Dorsolateral prefrontal cortex (tissue), 120 donors: ENCODE measurements at regions of chr9 and their contacts with region 1.

Region 1: GRCh38 chr9:97501177-97501971 is at the start of gene TMOD1:
- DNase-seq: peak in 9 of 10 donors; percentile 29 to 81 (median 63)
- H3K4me3 ChIP-seq: peak within 1 kb of the TSS; percentile 64 to 97 (median 85)
- H3K27ac ChIP-seq: peak within 1 kb of the TSS in 57 of 59 donors; percentile 48 to 95 (median 82)
- H3K27me3 ChIP-seq: no peaks in the 10 kb centered on the region
- CTCF ChIP-seq: peak in 21 of 56 donors; percentile 8 to 45 (median 23)
- total RNA-seq, gene TMOD1: 17.3 to 70.1 (median 37.3) TPM

Region 2: GRCh38 chr9:97062417-97062985 is 438.9 kb before region 1 on chr9:
- intact Hi-C with region 1: no loop called
- DNase-seq: no peak
- H3K4me3 ChIP-seq: no peak overlapping the region
- H3K27ac ChIP-seq: no peak overlapping the region
- H3K27me3 ChIP-seq: no peaks in the 10 kb centered on the region
- CTCF ChIP-seq: no peak

Region 3: GRCh38 chr9:97468658-97469448 is 32.5 kb before region 1 on chr9:
- intact Hi-C with region 1: loop called in 1 of 2 experiments (anchors 5 kb)
- DNase-seq: peak; percentile 60 to 91 (median 80)
- H3K4me3 ChIP-seq: peak overlapping the region in 1 of 59 donors; percentile 4
- H3K27ac ChIP-seq: peak overlapping the region; percentile 6 to 93 (median 85)
- H3K27me3 ChIP-seq: no peaks in the 10 kb centered on the region
- CTCF ChIP-seq: peak; percentile 49 to 98 (median 90)

Region 4: GRCh38 chr9:97484134-97484533 is 17.2 kb before region 1 on chr9:
- intact Hi-C with region 1: loop called (anchors 2 kb)
- DNase-seq: peak in 8 of 10 donors; percentile 50 to 83 (median 65)
- H3K4me3 ChIP-seq: peak overlapping the region in 4 of 59 donors; percentile 6 to 32 (median 26)
- H3K27ac ChIP-seq: peak overlapping the region in 49 of 59 donors; percentile 3 to 85 (median 58)
- H3K27me3 ChIP-seq: no peaks in the 10 kb centered on the region
- CTCF ChIP-seq: peak in 2 of 56 donors; percentile 12 to 19

Region 5: DNA sequence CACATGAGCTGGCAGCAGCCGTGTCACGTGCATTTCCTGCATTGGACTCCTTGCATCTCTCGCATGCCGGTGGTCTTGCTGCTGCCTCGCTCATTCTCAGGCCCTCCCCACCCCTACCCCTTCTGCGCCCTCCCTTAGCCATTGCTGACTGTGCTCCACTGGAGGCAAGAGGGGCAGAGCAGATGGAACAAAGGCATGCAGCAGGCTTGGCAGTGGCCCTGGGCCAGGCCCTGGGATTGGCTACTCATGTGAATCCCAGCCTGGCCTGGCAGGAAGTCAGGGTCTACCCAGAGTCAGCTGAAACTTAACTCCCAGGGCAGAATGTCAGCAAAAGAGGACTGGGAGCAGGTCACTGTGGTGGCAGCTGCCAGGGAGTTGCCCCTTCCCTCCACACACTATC is 69.5 kb after region 1 on chr9:
- intact Hi-C with region 1: loop called in 1 of 2 experiments (anchors 2 kb)
- DNase-seq: peak; percentile 56 to 94 (median 67)
- H3K4me3 ChIP-seq: peak overlapping the region in 3 of 59 donors; percentile 5 to 12 (median 6)
- H3K27ac ChIP-seq: peak overlapping the region in 45 of 59 donors; percentile 5 to 81 (median 57)
- H3K27me3 ChIP-seq: no peaks in the 10 kb centered on the region
- CTCF ChIP-seq: no peak

Region 6: DNA sequence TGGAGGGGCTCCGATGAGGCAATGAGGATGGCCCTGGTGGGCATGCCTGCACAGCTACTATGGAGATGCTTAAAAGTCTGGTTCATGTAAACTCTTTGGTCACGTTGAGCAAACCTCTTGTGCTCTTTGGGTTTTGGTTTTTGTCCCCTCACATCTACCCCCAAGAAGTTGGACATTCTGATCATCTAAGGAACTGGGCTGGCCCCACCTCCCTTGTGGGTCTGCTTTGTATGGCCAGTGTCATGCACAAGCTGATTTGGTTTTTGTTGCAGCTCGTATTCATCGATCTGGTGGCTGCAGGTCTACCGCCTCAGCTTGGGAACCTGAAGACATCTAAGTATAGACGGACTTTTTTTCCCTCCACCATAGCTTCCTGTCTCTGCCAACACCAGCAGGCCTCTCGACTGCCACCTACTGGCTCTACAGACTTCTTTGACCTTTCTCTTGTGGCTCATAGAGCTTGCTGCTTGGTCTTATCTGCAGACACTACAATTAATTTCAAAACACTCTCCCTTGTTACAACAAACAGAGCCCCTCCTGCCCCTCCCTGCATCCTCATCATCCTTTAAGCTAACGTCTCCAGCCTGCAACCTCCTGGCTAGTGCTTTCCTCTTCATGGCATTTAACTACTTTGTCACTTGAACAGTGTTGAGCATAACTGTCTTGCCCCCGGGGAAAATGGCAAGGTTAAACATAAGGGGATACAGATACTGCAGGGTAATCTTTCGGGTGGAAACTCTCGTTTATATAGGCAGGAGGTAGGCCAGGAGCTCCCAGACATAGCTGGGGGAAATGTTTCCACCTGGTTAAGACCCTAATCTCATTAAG is 97.3 kb after region 1 on chr9:
- intact Hi-C with region 1: loop called in 1 of 2 experiments (anchors 10 kb)
- DNase-seq: peak; percentile 44 to 88 (median 74)
- H3K4me3 ChIP-seq: no peak overlapping the region
- H3K27ac ChIP-seq: peak overlapping the region in 33 of 59 donors; percentile 3 to 94 (median 40)
- H3K27me3 ChIP-seq: no peaks in the 10 kb centered on the region
- CTCF ChIP-seq: peak; percentile 60 to 92 (median 85)

Region 7: DNA sequence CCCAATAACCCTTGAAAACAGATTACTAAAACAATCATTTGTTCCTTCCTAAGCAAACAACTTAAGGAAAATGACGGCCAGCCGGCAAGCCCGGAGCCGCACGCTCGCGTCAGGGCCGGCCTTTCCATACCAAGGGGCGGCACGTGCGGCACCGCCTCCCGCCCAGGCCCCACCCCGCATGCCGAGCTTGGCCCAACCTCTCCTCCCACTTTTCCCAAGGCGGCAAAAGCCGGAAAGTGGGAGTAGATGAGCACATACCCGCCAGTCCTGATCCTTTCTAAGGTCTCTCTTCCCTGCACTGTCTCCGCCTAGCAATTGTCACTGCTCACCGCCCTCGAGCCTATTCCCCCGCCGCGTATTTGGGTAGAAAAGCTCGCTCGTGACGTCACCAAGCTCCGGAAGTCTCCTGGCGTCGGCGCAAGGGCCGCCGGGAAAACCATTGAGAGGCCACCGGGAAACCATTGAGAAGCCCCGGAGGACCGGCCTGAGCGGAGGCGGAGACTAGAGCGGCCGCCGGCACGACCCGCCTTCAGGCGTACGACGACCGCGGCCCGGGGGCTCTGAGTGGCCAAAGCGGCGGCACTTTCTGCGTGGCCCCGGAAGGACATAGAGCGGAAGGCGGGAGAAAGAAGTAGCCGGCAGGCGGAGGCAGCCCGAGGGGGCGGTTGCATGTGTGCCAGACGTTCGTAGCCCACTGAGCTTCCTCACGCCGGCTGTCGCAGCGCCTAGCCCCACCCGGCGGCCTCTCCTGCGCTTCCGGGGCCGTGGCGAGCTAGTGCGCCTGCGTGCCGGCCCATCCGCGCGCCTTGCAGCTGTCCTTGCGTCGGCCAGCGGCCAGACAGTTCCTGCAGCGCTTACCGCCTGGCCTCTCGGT is 131.8 kb after region 1 on chr9 and contains the starts of genes NCBP1 and TSTD2:
- intact Hi-C with region 1: no loop called
- DNase-seq: peak; percentile 93 to 98 (median 97)
- H3K4me3 ChIP-seq: peak within 1 kb of the TSS; percentile 78 to 100 (median 96)
- H3K27ac ChIP-seq: peak within 1 kb of the TSS; percentile 82 to 99 (median 96)
- H3K27me3 ChIP-seq: no peaks in the 10 kb centered on the region
- CTCF ChIP-seq: peak in 34 of 56 donors; percentile 15 to 63 (median 32)
- total RNA-seq, gene NCBP1: 17.9 to 48.7 (median 32.4) TPM
- total RNA-seq, gene TSTD2: 17.7 to 33.6 (median 25.5) TPM

Region 8: GRCh38 chr9:97890038-97890437 is 388.7 kb after region 1 on chr9:
- intact Hi-C with region 1: no loop called
- DNase-seq: no peak
- H3K4me3 ChIP-seq: no peak overlapping the region
- H3K27ac ChIP-seq: no peak overlapping the region
- H3K27me3 ChIP-seq: no peaks in the 10 kb centered on the region
- CTCF ChIP-seq: peak in 46 of 56 donors; percentile 7 to 55 (median 35)